ENCODE measurements at regions of chr1 and their contacts with region 1.

Region 1: DNA sequence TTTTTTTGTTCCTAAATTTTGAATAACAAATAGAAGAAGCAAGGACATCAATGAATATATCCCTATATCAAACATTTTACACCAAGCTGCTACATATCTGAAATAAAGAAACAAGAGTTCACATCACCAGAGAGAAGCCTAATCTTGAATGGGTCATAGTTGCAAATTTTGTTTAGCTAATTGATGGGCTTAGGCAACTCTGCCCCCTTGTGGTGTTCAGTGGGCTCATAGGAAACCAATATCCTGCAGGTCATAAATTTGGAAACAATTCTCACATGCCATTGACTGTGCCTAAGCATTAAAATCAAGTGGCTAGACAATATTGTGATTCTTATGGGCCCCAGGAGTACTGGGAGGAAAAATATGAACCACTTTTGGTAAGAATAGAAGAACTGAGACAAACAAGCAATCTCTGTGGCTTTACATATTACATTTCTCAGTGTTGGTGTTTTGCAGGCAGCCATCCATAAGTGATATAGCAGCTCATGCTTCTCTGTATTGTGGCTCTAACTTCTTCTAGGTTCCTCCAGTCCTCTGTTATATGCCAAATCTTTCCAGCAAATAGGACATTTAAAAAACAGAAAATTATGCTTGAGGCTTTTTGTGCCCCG is 1262.8 kb upstream of the PRMT6 start:
- DNase-seq: no peak
- H3K4me3 ChIP-seq: no peak overlapping the region
- H3K27ac ChIP-seq: no peak overlapping the region
- H3K4me1 ChIP-seq: no peaks in the 10 kb centered on the region
- H3K27me3 ChIP-seq: no peaks in the 10 kb centered on the region
- CTCF ChIP-seq: no peak
- POLR2A ChIP-seq: no peak

Region 2: GRCh38 chr1:104780470-104781078 is 1013.1 kb before region 1 on chr1:
- CTCF ChIA-PET with region 1: no interaction called
- POLR2A ChIA-PET with region 1: no interaction called
- dilution Hi-C with region 1: no loop called
- intact Hi-C with region 1: loop called (anchors 10 kb)
- DNase-seq: peak; percentile 9
- H3K4me3 ChIP-seq: no peak overlapping the region
- H3K27ac ChIP-seq: no peak overlapping the region
- H3K4me1 ChIP-seq: no peaks in the 10 kb centered on the region
- H3K27me3 ChIP-seq: no peaks in the 10 kb centered on the region
- CTCF ChIP-seq: peak; percentile 42 to 55
- POLR2A ChIP-seq: no peak

Region 3: DNA sequence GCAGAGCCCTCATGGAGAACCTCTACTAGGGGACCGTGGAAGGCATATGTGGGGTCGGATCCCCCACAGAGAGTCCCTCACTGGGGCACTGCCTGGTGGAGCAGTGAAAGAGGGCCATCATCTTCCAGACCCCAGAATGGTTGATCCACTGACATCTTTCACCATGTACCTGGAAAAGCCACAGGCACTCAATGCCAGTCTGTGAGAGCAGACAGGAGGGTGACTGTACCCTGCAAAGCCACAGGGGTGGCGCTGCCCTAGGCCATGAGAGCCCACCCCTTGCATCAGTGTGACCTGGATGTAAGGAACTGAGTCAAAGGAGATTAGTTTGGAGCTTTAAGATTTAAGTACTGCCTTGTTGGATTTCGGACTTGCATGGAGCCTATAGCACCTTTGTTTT is 13.9 kb before region 1 on chr1:
- CTCF ChIA-PET with region 1: no interaction called
- POLR2A ChIA-PET with region 1: no interaction called
- dilution Hi-C with region 1: no loop called
- intact Hi-C with region 1: no loop called
- DNase-seq: no peak
- H3K4me3 ChIP-seq: no peak overlapping the region
- H3K27ac ChIP-seq: no peak overlapping the region
- H3K4me1 ChIP-seq: no peaks in the 10 kb centered on the region
- H3K27me3 ChIP-seq: no peaks in the 10 kb centered on the region
- CTCF ChIP-seq: no peak
- POLR2A ChIP-seq: no peak